Mammary epithelial cell (primary cell): ENCODE measurements at regions of chr2 and their contacts with region 1.

Region 1: DNA sequence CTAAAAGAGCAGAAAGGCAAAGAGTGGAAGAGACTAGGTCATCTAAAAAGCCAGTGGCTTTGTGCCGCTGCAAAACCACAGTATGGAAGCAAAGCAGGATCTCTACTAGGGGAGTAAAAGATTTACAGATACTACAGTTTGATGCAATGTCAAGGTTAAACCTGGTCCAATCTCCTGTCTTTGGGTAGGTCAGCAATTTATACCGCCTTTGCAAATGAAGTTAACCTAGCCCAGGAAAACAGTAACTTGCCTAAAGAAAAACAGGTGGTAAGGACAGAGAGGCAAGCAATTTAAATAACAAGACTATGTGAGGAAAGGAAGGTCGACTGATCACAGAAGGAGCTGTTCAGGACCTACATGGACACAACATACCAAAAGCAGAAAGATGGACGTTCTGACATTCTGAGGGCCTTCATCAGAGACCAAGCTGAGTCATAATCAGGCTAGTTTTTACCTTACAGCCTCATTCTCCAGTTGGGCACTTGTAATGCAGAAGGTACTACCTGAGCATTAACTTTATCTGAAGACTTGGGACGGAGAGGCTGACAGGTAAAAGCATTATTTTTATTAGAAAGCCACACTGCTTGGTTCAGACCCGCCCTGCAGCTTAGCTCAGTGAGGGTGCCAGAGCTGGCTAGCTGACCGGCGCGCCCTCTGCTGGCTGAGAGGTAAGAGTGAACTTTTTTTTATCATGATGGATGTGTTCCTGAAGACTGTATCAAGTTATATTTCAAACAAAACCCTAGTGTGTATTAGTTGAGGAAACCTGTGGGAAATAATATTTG is 15.9 kb downstream of the CDKL4 start:
- DNase-seq: peak; percentile 47
- H3K4me3 ChIP-seq: no peak overlapping the region
- H3K27ac ChIP-seq: no peak overlapping the region
- H3K4me1 ChIP-seq: peaks cover 5% of the 10 kb centered on the region
- H3K27me3 ChIP-seq: no peaks in the 10 kb centered on the region
- CTCF ChIP-seq: peak; percentile 81 to 94

Region 2: GRCh38 chr2:38947240-38948239 is 280.3 kb before region 1 on chr2:
- CTCF ChIA-PET with region 1: interaction called, 12 read pairs
- dilution Hi-C with region 1: no loop called
- in situ Hi-C with region 1: loop called (anchors 10 kb)
- intact Hi-C with region 1: loop called (anchors 1 kb)
- DNase-seq: peak; percentile 87
- H3K4me3 ChIP-seq: no peak overlapping the region
- H3K27ac ChIP-seq: no peak overlapping the region
- H3K4me1 ChIP-seq: peaks cover 9% of the 10 kb centered on the region
- H3K27me3 ChIP-seq: no peaks in the 10 kb centered on the region
- CTCF ChIP-seq: peak; percentile 77 to 83

Region 3: GRCh38 chr2:39059366-39059952 is 168.4 kb before region 1 on chr2:
- CTCF ChIA-PET with region 1: interaction called, 7 read pairs
- dilution Hi-C with region 1: no loop called
- in situ Hi-C with region 1: loop called (anchors 5 to 10 kb)
- intact Hi-C with region 1: loop called (anchors 1 kb)
- DNase-seq: peak; percentile 23
- H3K4me3 ChIP-seq: no peak overlapping the region
- H3K27ac ChIP-seq: no peak overlapping the region
- H3K4me1 ChIP-seq: no peaks in the 10 kb centered on the region
- H3K27me3 ChIP-seq: no peaks in the 10 kb centered on the region
- CTCF ChIP-seq: peak; percentile 61 to 64

Region 4: GRCh38 chr2:39069136-39069515 is 158.7 kb before region 1 on chr2:
- CTCF ChIA-PET with region 1: interaction called, 6 read pairs
- dilution Hi-C with region 1: no loop called
- in situ Hi-C with region 1: loop called (anchors 5 to 10 kb)
- intact Hi-C with region 1: loop called (anchors 2 kb)
- DNase-seq: peak; percentile 57
- H3K4me3 ChIP-seq: no peak overlapping the region
- H3K27ac ChIP-seq: peak overlapping the region; percentile 86
- H3K4me1 ChIP-seq: peaks cover 17% of the 10 kb centered on the region
- H3K27me3 ChIP-seq: no peaks in the 10 kb centered on the region
- CTCF ChIP-seq: peak in 1 of 2 donors; percentile 24

Region 5: DNA sequence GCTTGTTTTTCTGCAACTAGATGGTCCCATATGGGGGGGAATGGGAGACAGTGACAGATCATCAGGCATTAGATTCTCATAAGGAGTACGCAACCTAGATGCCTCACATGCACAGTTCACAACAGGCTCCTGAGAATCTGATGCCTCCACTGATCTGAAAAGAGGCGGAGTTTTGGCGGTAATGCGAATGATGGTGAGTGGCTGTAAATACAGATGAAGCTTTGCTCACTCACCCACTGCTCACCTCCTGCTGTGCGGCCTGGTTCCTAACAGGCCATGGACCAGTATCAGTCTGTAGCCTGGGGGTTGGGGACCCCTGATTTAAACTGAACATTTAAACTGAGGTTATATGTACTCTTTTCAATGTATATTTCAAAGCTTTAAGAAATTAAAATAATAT is 147.7 kb before region 1 on chr2:
- CTCF ChIA-PET with region 1: interaction called, 14 read pairs
- dilution Hi-C with region 1: no loop called
- in situ Hi-C with region 1: no loop called
- intact Hi-C with region 1: no loop called
- DNase-seq: no peak
- H3K4me3 ChIP-seq: no peak overlapping the region
- H3K27ac ChIP-seq: no peak overlapping the region
- H3K4me1 ChIP-seq: no peaks in the 10 kb centered on the region
- H3K27me3 ChIP-seq: no peaks in the 10 kb centered on the region
- CTCF ChIP-seq: no peak

Region 6: DNA sequence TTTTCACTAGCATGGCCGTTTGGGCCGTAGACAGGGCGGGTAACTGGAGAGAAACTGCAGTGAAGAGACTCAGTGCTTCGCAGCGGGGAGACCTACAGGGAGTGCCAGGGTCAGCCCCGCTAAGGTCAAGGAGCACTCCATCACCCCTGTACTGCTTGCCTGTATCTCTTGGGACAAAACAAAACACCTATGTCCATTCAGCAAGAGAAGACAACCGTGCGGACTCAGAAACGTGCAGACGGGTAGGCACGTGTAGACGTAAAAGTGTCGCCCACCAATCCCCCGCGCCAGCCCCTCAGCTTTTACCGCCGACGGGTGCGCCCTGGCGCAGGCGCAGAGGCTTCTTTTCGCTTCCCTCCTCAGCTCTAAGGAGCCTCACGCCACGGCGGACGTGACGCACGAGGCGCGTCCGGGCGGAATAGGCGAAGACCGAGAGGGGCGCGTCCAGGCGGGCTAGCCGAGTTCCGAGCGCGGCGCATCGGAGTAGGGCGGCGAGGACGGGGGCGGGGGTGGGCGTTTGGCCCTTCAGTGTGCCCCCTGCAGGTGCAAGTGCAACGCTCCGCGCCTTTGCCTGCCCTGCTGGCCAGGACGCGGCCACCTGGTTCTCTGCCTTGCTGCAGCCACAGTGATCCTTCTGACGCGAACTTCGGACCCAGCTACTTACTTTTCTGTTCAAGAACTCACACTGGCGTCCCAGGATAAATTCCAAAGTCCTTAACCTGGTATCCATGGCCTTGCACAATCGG is 103.6 kb before region 1 on chr2:
- CTCF ChIA-PET with region 1: no interaction called
- dilution Hi-C with region 1: no loop called
- in situ Hi-C with region 1: no loop called
- intact Hi-C with region 1: loop called (anchors 1 kb)
- DNase-seq: peak; percentile 92
- H3K4me3 ChIP-seq: peak overlapping the region; percentile 51 to 97 (median 84)
- H3K27ac ChIP-seq: peak overlapping the region; percentile 93
- H3K4me1 ChIP-seq: peaks cover 23% of the 10 kb centered on the region
- H3K27me3 ChIP-seq: no peaks in the 10 kb centered on the region
- CTCF ChIP-seq: peak; percentile 27 to 64

Region 7: GRCh38 chr2:39275016-39275415 is 47.2 kb after region 1 on chr2:
- CTCF ChIA-PET with region 1: no interaction called
- dilution Hi-C with region 1: no loop called
- in situ Hi-C with region 1: no loop called
- intact Hi-C with region 1: no loop called
- DNase-seq: peak; percentile 55
- H3K4me3 ChIP-seq: no peak overlapping the region
- H3K27ac ChIP-seq: no peak overlapping the region
- H3K4me1 ChIP-seq: no peaks in the 10 kb centered on the region
- H3K27me3 ChIP-seq: no peaks in the 10 kb centered on the region
- CTCF ChIP-seq: no peak